ENCODE measurements at regions of chr17 and their contacts with region 1.

Region 1: DNA sequence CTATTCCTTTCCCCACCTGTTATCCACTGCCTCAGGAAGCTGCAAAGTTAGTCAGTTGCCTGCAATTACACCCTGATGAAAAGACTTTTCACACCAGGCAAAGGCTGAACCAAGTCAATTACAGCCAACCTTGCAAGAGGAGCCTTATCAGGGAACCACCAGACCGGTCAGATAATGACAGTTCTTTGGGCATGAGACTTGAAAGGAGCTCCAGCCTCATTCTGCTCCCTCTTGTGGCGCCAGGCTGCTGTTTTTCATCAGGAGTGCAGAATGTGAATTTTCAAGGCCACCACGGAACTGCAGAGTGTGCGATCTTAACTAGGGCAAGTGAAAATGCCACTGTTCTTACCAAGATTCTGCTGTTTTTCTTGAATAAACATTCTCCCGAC is 22.5 kb downstream of the DNAI2 start:
- DNase-seq: peak; percentile 76
- H3K4me3 ChIP-seq: no peak overlapping the region; a peak in 1 of 4 replicates
- H3K27ac ChIP-seq: no peak overlapping the region
- H3K4me1 ChIP-seq: peaks cover 0 to 3% of the 10 kb centered on the region in 2 experiments; a peak in 1 of 4 replicates
- H3K27me3 ChIP-seq: no peaks in the 10 kb centered on the region
- CTCF ChIP-seq: peak; percentile 16; the same call in 1 of the 2 replicates
- EP300 ChIP-seq: no peak
- RAD21 ChIP-seq: peak; percentile 76

Region 2: GRCh38 chr17:74203439-74204240 is 92.9 kb before region 1 on chr17 and contains the start of gene RPL38:
- CTCF ChIA-PET with region 1: interaction called, 30 read pairs
- POLR2A ChIA-PET with region 1: interaction called, 3 read pairs
- DNase-seq: peak; percentile 98
- H3K4me3 ChIP-seq: peak within 1 kb of the TSS; percentile 72 to 99
- H3K27ac ChIP-seq: peak within 1 kb of the TSS; percentile 63 to 81
- H3K4me1 ChIP-seq: peaks cover 22 to 36% of the 10 kb centered on the region in 2 experiments
- H3K27me3 ChIP-seq: no peaks in the 10 kb centered on the region
- CTCF ChIP-seq: peak; percentile 99
- EP300 ChIP-seq: peak in 1 of 2 experiments; percentile 75; a peak in 3 of 4 replicates
- RAD21 ChIP-seq: peak; percentile 57
- polyA plus RNA-seq, gene RPL38: 816 and 4,154 TPM in 2 replicates

Region 3: DNA sequence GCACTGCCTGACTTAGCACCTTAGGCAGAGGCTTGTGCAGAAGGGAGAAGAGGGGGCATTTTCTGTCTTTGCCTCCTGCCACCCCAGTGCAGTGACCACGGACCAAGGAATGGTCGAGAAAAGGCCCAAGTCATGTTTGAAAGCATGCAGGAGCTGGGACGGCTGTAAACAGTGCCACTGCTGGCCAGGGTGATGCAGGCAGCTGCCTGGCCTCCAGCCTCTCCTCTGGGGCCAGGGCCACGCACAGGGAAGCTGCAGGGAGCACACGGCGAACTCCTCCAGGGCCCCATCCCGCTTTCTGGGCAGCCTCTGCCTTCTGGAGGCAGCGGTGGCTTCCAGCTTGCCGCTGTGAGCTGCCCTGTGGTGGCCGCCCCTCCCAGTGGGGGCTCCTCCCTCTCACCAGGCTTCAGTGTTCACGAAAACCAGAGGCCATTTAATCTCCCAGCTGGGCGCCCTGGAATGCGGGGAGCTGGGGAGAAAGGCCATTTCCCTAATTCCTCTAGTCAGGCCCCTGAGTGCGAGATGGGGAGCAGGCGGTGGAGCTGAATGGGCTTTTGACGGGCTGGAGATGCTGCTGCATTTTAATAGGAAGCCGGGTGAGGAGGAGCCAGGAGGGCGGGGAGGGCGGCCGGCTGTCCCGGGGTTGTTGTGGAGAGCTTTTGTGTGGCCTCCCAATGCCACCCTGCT is 51.3 kb before region 1 on chr17:
- CTCF ChIA-PET with region 1: interaction called, 17 read pairs
- POLR2A ChIA-PET with region 1: no interaction called
- DNase-seq: peak; percentile 56
- H3K4me3 ChIP-seq: no peak overlapping the region
- H3K27ac ChIP-seq: no peak overlapping the region; a peak in 1 of 4 replicates
- H3K4me1 ChIP-seq: peaks cover 0 to 36% of the 10 kb centered on the region in 2 experiments; a peak in 1 of 4 replicates
- H3K27me3 ChIP-seq: no peaks in the 10 kb centered on the region
- CTCF ChIP-seq: no peak
- EP300 ChIP-seq: no peak
- RAD21 ChIP-seq: no peak

Region 4: GRCh38 chr17:74282587-74283370 is 13.8 kb before region 1 on chr17:
- CTCF ChIA-PET with region 1: interaction called, 93 read pairs
- POLR2A ChIA-PET with region 1: no interaction called
- DNase-seq: no peak
- H3K4me3 ChIP-seq: no peak overlapping the region
- H3K27ac ChIP-seq: no peak overlapping the region
- H3K4me1 ChIP-seq: no peaks in the 10 kb centered on the region
- H3K27me3 ChIP-seq: no peaks in the 10 kb centered on the region
- CTCF ChIP-seq: no peak
- EP300 ChIP-seq: no peak
- RAD21 ChIP-seq: no peak

Region 5: GRCh38 chr17:74354123-74354522 is 57.6 kb after region 1 on chr17:
- CTCF ChIA-PET with region 1: interaction called, 31 read pairs
- POLR2A ChIA-PET with region 1: no interaction called
- DNase-seq: peak; percentile 94
- H3K4me3 ChIP-seq: no peak overlapping the region
- H3K27ac ChIP-seq: no peak overlapping the region
- H3K4me1 ChIP-seq: peaks cover 0 to 2% of the 10 kb centered on the region in 2 experiments; a peak in 1 of 4 replicates
- H3K27me3 ChIP-seq: no peaks in the 10 kb centered on the region
- CTCF ChIP-seq: no peak
- EP300 ChIP-seq: no peak
- RAD21 ChIP-seq: peak; percentile 54

Measured in SK-N-SH (cell line).